ENCODE measurements at regions of chr6 and their contacts with region 1.

Region 1: GRCh38 chr6:168895102-168895812 is 358.4 kb downstream of the THBS2 start:
- DNase-seq: peak; percentile 69 to 97 (median 86)

Region 2: GRCh38 chr6:168864541-168865460 is 30.5 kb before region 1 on chr6:
- intact Hi-C with region 1: no loop called
- DNase-seq: peak in 1 of 10 donors; percentile 48

Region 3: GRCh38 chr6:169487579-169488436 is 592.6 kb after region 1 on chr6:
- intact Hi-C with region 1: loop called (anchors 10 kb)
- DNase-seq: peak in 2 of 10 donors; percentile 27 to 65

Region 4: DNA sequence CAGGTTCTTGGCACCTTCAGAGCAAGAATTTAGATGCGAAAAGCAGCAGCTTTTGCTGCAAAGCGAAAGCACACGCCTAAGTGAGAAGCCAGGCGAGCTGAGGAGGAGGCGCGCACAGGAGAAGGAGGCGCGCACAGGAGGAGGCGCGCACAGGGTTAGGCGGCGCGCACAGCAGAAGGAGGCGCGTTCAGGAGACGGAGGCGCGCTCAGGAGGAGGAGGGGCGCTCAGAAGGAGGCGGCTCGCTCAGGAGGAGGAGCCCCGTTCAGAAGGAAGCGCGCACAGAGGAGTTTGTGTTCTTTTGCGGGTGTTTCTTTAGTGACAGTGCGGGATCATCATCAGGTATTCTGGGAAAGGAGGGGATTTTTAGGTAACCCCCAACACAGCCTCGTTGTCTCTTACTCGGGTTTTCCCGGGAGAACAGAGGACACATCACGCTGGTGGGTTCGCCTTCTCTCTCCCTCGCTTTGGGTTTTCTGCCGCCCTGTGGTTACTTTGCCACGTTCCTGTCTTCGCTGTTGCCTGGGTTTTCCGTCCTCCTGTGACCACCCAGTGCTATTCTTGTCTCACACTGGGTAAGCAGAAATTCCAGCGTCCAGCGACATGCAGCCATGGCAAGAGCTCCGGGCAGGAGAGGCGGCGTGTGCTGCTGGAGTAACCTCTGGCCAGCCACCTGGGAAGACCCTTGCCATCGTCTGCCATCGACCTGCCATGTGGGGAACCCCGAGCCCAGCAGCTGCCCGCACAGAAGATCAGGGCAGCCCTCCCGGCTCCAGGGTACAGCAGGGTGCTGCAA is 759.5 kb after region 1 on chr6:
- intact Hi-C with region 1: loop called (anchors 10 kb)
- DNase-seq: peak; percentile 48 to 96 (median 60)